ENCODE measurements at regions of chr1 and their contacts with region 1.

Region 1: GRCh38 chr1:49346767-49347349 is 570.2 kb upstream of the BEND5 start:
- DNase-seq: peak; percentile 41
- H3K4me3 Mint-ChIP-seq: no peak overlapping the region
- H3K27ac Mint-ChIP-seq: peak overlapping the region; percentile 85
- H3K4me1 Mint-ChIP-seq: peaks cover 48% of the 10 kb centered on the region
- H3K27me3 Mint-ChIP-seq: no peaks in the 10 kb centered on the region
- CTCF ChIP-seq: no peak

Region 2: DNA sequence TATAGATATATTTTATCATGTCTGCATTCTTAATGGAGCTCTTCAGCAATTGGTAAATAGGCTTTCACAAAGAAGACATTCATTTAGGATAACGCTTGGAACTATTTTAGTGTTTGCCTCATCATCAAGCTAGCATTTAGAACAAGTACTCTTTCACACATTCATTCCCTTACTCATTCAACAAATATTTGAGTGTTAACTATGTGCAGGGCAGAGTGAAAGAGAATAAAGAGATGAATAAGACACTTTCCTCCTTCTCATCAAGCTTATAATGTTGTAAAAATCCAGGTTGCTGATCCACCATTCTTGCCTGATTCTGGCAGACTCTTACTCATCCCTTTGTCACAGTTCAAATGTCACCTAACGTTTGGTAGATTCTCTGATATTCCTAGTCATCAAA is 183.8 kb before region 1 on chr1:
- CTCF ChIA-PET with region 1: no interaction called
- intact Hi-C with region 1: loop called (anchors 5 kb)
- DNase-seq: no peak
- H3K4me3 Mint-ChIP-seq: no peak overlapping the region
- H3K27ac Mint-ChIP-seq: peak overlapping the region; percentile 53
- H3K4me1 Mint-ChIP-seq: peaks cover 47% of the 10 kb centered on the region
- H3K27me3 Mint-ChIP-seq: no peaks in the 10 kb centered on the region
- CTCF ChIP-seq: no peak

Region 3: DNA sequence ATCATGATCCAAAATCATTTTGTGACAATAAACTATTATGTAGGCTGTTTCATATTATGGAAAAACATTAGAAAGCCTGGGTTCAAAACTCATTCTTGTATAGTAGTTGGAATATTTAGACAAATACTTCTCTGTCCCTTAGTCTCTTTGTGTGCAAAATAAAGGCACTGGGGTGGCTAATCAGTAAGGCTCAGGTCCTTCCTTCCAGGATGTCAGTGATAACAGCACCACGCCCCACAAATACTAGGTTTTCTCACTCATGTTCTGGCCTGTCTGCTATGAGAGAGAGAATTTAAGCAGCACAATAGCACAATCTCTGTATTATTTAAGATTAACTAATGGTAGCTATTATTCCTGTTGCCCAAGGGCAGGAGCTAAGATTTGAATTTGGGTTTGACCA is 111.9 kb before region 1 on chr1:
- CTCF ChIA-PET with region 1: no interaction called
- intact Hi-C with region 1: loop called (anchors 2 kb)
- DNase-seq: no peak
- H3K4me3 Mint-ChIP-seq: no peak overlapping the region
- H3K27ac Mint-ChIP-seq: no peak overlapping the region
- H3K4me1 Mint-ChIP-seq: peaks cover 5% of the 10 kb centered on the region
- H3K27me3 Mint-ChIP-seq: no peaks in the 10 kb centered on the region
- CTCF ChIP-seq: no peak

Region 4: GRCh38 chr1:49541096-49541752 is 194.4 kb after region 1 on chr1:
- CTCF ChIA-PET with region 1: no interaction called
- intact Hi-C with region 1: no loop called
- DNase-seq: no peak
- H3K4me3 Mint-ChIP-seq: no peak overlapping the region
- H3K27ac Mint-ChIP-seq: no peak overlapping the region
- H3K4me1 Mint-ChIP-seq: no peaks in the 10 kb centered on the region
- H3K27me3 Mint-ChIP-seq: no peaks in the 10 kb centered on the region
- CTCF ChIP-seq: no peak

Region 5: GRCh38 chr1:49765034-49765433 is 418.2 kb after region 1 on chr1:
- CTCF ChIA-PET with region 1: no interaction called
- intact Hi-C with region 1: loop called (anchors 10 kb)
- DNase-seq: peak; percentile 22
- H3K4me3 Mint-ChIP-seq: no peak overlapping the region
- H3K27ac Mint-ChIP-seq: no peak overlapping the region
- H3K4me1 Mint-ChIP-seq: peaks cover 10% of the 10 kb centered on the region
- H3K27me3 Mint-ChIP-seq: no peaks in the 10 kb centered on the region
- CTCF ChIP-seq: peak; percentile 50

Measured in Calu3 (cell line).